HepG2 (cell line): ENCODE measurements at regions of chr6 and their contacts with region 1.

Region 1: GRCh38 chr6:63272397-63272796 is 47.4 kb downstream of the LGSN start:
- DNase-seq: peak; percentile 51
- ATAC-seq: peak; percentile 69; the same call in 2 of the 3 replicates
- H3K4me3 ChIP-seq: no peak overlapping the region
- H3K27ac ChIP-seq: no peak overlapping the region
- H3K4me1 ChIP-seq: no peaks in the 10 kb centered on the region
- H3K27me3 ChIP-seq: no peaks in the 10 kb centered on the region; a peak in 1 of 5 replicates
- CTCF ChIP-seq: peak; percentile 66
- EP300 ChIP-seq: no peak
- POLR2A ChIP-seq: no peak
- RAD21 ChIP-seq: no peak

Region 2: GRCh38 chr6:62891065-62891647 is 381.2 kb before region 1 on chr6:
- CTCF ChIA-PET with region 1: no interaction called
- POLR2A ChIA-PET with region 1: no interaction called
- in situ Hi-C with region 1: no loop called
- intact Hi-C with region 1: loop called (anchors 5 kb)
- DNase-seq: peak; percentile 24
- ATAC-seq: no peak
- H3K4me3 ChIP-seq: no peak overlapping the region
- H3K27ac ChIP-seq: no peak overlapping the region
- H3K4me1 ChIP-seq: no peaks in the 10 kb centered on the region
- H3K27me3 ChIP-seq: no peaks in the 10 kb centered on the region
- CTCF ChIP-seq: no peak
- EP300 ChIP-seq: no peak
- POLR2A ChIP-seq: no peak
- RAD21 ChIP-seq: no peak

Region 3: GRCh38 chr6:63066055-63066704 is 206.2 kb before region 1 on chr6:
- CTCF ChIA-PET with region 1: interaction called, 17 read pairs
- POLR2A ChIA-PET with region 1: no interaction called
- in situ Hi-C with region 1: loop called (anchors 10 kb)
- intact Hi-C with region 1: loop called (anchors 1 kb)
- DNase-seq: peak; percentile 35
- ATAC-seq: peak; percentile 83
- H3K4me3 ChIP-seq: no peak overlapping the region
- H3K27ac ChIP-seq: no peak overlapping the region
- H3K4me1 ChIP-seq: no peaks in the 10 kb centered on the region
- H3K27me3 ChIP-seq: no peaks in the 10 kb centered on the region
- CTCF ChIP-seq: peak; percentile 59
- EP300 ChIP-seq: no peak
- POLR2A ChIP-seq: no peak
- RAD21 ChIP-seq: no peak; the same call in 1 of the 2 replicates

Region 4: DNA sequence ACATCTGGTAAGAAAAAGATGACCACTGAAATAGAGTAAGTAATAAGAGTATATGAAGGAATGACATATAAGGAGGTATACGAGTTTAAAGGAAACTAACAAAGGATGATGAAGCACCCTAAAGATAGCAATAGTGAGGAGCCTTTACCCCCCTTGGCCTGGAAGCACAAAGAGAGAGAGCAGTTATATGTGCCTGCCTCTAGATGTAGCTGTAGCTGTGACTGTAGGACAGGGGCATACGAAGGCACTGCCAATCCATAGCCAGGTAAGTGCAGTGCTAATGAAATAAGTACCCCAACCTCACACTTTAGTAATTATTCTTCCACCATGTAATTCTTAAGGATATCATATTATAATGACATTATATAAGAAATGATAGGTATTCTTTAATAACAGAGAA is 151.2 kb before region 1 on chr6:
- CTCF ChIA-PET with region 1: no interaction called
- POLR2A ChIA-PET with region 1: no interaction called
- in situ Hi-C with region 1: no loop called
- intact Hi-C with region 1: loop called (anchors 1 kb)
- DNase-seq: peak; percentile 19
- ATAC-seq: peak; percentile 97
- H3K4me3 ChIP-seq: no peak overlapping the region
- H3K27ac ChIP-seq: no peak overlapping the region
- H3K4me1 ChIP-seq: no peaks in the 10 kb centered on the region
- H3K27me3 ChIP-seq: no peaks in the 10 kb centered on the region
- CTCF ChIP-seq: peak; percentile 53
- EP300 ChIP-seq: no peak
- POLR2A ChIP-seq: no peak
- RAD21 ChIP-seq: no peak